Head of caudate nucleus (tissue), 42 donors: ENCODE measurements at regions of chr17 and their contacts with region 1.

Region 1: GRCh38 chr17:45161019-45161825 is 453 bp upstream of the HEXIM2 start:
- DNase-seq: peak; percentile 97 to 100 (median 99)

Region 2: GRCh38 chr17:45149669-45150664 is 11.3 kb before region 1 on chr17:
- intact Hi-C with region 1: loop called (anchors 1 kb)
- DNase-seq: peak in 41 of 42 donors; percentile 47 to 84 (median 67)

Region 3: GRCh38 chr17:45317112-45317928 is 156.1 kb after region 1 on chr17:
- intact Hi-C with region 1: loop called (anchors 5 kb)
- DNase-seq: peak; percentile 98 to 100 (median 99)